ENCODE measurements at regions of chr6 and their contacts with region 1.

Region 1: DNA sequence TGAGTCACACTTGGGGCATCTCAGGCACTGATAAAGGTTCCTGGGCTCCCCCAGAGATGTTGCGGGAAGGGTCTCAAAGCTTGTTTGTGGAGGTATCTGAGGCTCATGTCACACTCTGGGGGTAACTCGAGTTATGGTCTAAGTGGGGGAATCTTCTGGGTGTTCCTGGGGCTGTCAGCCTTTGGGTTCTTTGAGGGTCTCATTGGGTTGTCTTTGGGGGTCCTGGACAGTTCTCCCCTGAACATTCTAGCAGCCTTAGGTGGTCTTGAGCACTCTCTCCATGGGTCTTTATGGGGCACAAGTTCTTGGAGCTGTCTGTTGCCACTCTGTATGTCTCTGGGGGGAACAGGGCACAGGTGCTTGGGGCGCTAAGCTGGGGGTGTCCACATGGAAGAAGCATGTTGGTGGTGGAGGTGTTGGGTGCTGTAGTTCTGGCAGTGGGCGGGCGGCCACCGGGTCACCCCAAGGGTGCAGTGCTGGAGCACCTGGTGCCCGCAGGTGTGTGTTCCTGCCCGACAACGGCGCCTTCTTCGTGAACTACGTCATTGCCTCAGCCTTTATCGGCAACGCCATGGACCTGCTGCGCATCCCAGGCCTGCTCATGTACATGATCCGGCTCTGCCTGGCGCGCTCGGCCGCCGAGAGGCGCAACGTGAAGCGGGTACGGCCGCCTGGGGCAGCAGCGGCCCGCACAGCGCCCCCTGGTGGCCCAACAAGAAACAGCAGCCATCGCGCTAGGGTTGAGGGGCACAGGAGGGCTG is 7.1 kb upstream of the CAPN11 start:
- DNase-seq: peak; percentile 54 to 80
- H3K4me3 ChIP-seq: no peak overlapping the region
- H3K27ac ChIP-seq: no peak overlapping the region
- H3K4me1 ChIP-seq: peaks cover 0 to 6% (median 5%) of the 10 kb centered on the region in 4 donors
- H3K27me3 ChIP-seq: no peaks in the 10 kb centered on the region
- CTCF ChIP-seq: peak; percentile 98 to 99

Region 2: GRCh38 chr6:44096612-44097011 is 54.9 kb before region 1 on chr6:
- intact Hi-C with region 1: loop called (anchors 2 kb)
- DNase-seq: peak; percentile 74 to 80
- H3K4me3 ChIP-seq: no peak overlapping the region
- H3K27ac ChIP-seq: no peak overlapping the region
- H3K4me1 ChIP-seq: no peaks in the 10 kb centered on the region
- H3K27me3 ChIP-seq: no peaks in the 10 kb centered on the region
- CTCF ChIP-seq: peak; percentile 81

Measured in tibial artery (tissue), 4 donors.